ENCODE measurements at regions of chr16 and their contacts with region 1.

Region 1: DNA sequence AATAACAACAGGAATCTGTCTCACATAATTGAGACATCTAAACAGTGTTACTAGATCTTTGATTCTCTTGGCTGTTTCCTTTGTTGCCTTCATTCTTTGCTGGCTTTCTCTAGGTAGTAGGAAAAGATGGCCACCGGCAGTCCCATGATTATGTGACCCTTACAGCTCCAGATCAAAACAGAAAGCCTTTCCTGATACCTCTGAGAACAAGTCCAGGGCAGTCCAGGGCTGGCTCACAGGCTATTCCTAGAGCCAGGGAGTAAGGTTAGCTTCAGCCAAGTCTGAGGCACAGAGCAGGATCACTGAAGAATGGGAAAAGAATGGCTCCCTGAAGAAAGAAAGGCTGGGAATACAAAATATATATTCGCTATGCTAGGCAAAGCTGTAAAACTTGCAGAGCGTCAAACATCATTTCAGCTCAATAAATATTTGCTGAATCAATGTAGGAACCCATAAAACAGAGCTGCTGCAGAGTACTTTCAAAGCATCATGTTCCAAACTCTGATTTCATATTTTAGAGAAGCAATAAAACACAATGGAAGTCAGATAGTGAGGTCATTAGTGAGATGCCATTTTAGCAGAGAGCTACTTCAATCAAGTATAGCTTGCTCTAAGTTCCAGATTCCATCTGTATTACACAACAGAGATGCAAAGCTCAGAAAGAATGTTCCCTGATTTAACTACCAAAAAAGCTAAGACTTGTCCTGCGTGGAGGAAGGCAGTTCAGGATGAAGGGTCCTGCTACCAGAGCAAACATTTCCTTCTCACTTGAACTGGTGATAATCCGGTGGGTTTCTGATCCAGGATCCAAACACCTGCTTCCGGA is 23.4 kb downstream of the ADAT1 start:
- DNase-seq: no peak
- ATAC-seq: no peak
- H3K4me3 ChIP-seq: no peak overlapping the region
- H3K4me3 Mint-ChIP-seq: no peak overlapping the region
- H3K27ac ChIP-seq: no peak overlapping the region
- H3K27ac Mint-ChIP-seq: no peak overlapping the region
- H3K4me1 ChIP-seq: no peaks in the 10 kb centered on the region
- H3K4me1 Mint-ChIP-seq: peaks cover 2 to 3% (median 3%) of the 10 kb centered on the region in 3 donors
- H3K27me3 ChIP-seq: no peaks in the 10 kb centered on the region
- H3K27me3 Mint-ChIP-seq: no peaks in the 10 kb centered on the region

Region 2: GRCh38 chr16:75647492-75648264 is 48.0 kb after region 1 on chr16 and contains the starts of genes KARS1 and TERF2IP:
- CTCF ChIA-PET with region 1: interaction called, 3 to 14 read pairs
- POLR2A ChIA-PET with region 1: interaction called in 1 of 2 experiments, 3 read pairs
- DNase-seq: peak; percentile 83 to 98 (median 94)
- ATAC-seq: peak; percentile 86 to 88 (median 87)
- H3K4me3 ChIP-seq: peak within 1 kb of the TSS; percentile 89 to 100
- H3K4me3 Mint-ChIP-seq: peak within 1 kb of the TSS; percentile 99 to 100 (median 99)
- H3K27ac ChIP-seq: peak within 1 kb of the TSS; percentile 94
- H3K27ac Mint-ChIP-seq: peak within 1 kb of the TSS; percentile 99
- H3K4me1 ChIP-seq: peaks cover 37 to 54% of the 10 kb centered on the region in 2 experiments
- H3K4me1 Mint-ChIP-seq: peaks cover 66 to 74% (median 69%) of the 10 kb centered on the region in 3 donors
- H3K27me3 ChIP-seq: no peaks in the 10 kb centered on the region
- H3K27me3 Mint-ChIP-seq: no peaks in the 10 kb centered on the region
- total RNA-seq, gene KARS1: 121 to 151 (median 128) TPM
- total RNA-seq, gene TERF2IP: 86.0 to 104 (median 94.0) TPM

Measured in T-cell (primary cell).